CD4-positive, alpha-beta T cell (primary cell): ENCODE measurements at regions of chr2 and their contacts with region 1.

Region 1: DNA sequence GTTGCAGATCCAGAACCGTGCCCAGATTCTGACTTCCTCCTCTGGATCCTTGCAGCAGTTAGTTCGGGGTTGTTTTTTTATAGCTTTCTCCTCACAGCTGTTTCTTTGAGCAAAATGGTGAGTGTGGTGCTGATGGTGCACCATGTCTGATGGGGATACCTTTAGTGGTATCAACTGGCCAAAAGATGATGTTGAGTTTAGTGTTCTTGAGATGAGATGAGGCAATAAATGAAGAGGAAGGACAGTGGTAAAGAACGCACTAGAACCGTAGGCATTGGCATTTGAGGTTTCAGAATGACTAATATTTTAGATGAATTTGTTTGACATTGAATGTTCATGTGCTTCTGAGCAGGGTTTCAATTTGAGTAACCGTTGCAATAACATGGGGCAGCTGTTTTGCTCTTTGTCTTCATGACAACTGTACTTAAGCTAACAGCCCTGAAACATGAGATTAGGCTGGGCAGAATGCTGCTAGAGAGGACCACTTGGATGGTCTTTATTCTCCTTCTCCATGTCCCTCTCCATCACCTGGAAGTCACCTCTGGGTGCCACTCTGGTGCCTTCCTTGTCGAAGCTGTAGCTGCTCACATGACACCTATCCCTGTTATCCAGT is 3.9 kb downstream of the CTLA4 start:
- DNase-seq: peak in 4 of 14 experiments; percentile 28 to 62 (median 48)
- ATAC-seq: no peak
- H3K4me3 ChIP-seq: peak overlapping the region; percentile 58
- H3K4me3 Mint-ChIP-seq: peak overlapping the region; percentile 89
- H3K27ac ChIP-seq: peak overlapping the region; percentile 6 to 62
- H3K27ac Mint-ChIP-seq: peak overlapping the region; percentile 93
- H3K4me1 ChIP-seq: peaks cover 57% of the 10 kb centered on the region
- H3K4me1 Mint-ChIP-seq: peaks cover 97% of the 10 kb centered on the region
- H3K27me3 ChIP-seq: no peaks in the 10 kb centered on the region
- H3K27me3 Mint-ChIP-seq: no peaks in the 10 kb centered on the region
- CTCF ChIP-seq: no peak

Region 2: DNA sequence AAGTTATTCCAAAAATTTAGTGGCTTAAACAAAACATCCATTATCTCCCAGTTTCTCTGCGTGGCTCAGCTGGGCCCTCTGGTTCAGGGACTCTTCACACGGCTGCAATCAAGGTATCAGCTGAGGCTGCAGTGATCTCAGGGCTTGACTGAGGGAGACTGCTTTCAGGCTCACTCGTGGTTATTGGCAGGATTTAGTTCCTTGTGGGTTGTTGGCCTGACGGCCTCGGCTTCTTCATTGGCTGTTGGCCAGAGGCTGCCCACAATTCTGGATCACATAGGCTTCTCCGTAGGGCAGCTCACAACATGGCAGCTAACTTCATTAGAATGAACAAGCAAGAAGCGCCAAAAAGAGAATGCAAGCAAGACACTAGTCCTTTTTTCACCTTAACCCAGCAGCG is 453.2 kb before region 1 on chr2:
- CTCF ChIA-PET with region 1: no interaction called
- POLR2A ChIA-PET with region 1: no interaction called
- intact Hi-C with region 1: no loop called
- DNase-seq: no peak
- ATAC-seq: no peak
- H3K4me3 ChIP-seq: no peak overlapping the region
- H3K4me3 Mint-ChIP-seq: no peak overlapping the region
- H3K27ac ChIP-seq: no peak overlapping the region
- H3K27ac Mint-ChIP-seq: no peak overlapping the region
- H3K4me1 ChIP-seq: no peaks in the 10 kb centered on the region
- H3K4me1 Mint-ChIP-seq: no peaks in the 10 kb centered on the region
- H3K27me3 ChIP-seq: no peaks in the 10 kb centered on the region
- H3K27me3 Mint-ChIP-seq: no peaks in the 10 kb centered on the region
- CTCF ChIP-seq: no peak

Region 3: GRCh38 chr2:203706403-203706802 is 165.1 kb before region 1 on chr2 and contains the start of gene CD28:
- CTCF ChIA-PET with region 1: no interaction called
- POLR2A ChIA-PET with region 1: interaction called, 10 read pairs
- intact Hi-C with region 1: no loop called
- DNase-seq: peak; percentile 78 to 97 (median 86)
- ATAC-seq: peak; percentile 76
- H3K4me3 ChIP-seq: peak within 1 kb of the TSS; percentile 81
- H3K4me3 Mint-ChIP-seq: peak within 1 kb of the TSS; percentile 90
- H3K27ac ChIP-seq: peak within 1 kb of the TSS; percentile 82 to 92
- H3K27ac Mint-ChIP-seq: peak within 1 kb of the TSS; percentile 92
- H3K4me1 ChIP-seq: peaks cover 22% of the 10 kb centered on the region
- H3K4me1 Mint-ChIP-seq: peaks cover 54% of the 10 kb centered on the region
- H3K27me3 ChIP-seq: no peaks in the 10 kb centered on the region
- H3K27me3 Mint-ChIP-seq: no peaks in the 10 kb centered on the region
- CTCF ChIP-seq: no peak
- total RNA-seq, gene CD28: 128 to 130 TPM

Region 4: DNA sequence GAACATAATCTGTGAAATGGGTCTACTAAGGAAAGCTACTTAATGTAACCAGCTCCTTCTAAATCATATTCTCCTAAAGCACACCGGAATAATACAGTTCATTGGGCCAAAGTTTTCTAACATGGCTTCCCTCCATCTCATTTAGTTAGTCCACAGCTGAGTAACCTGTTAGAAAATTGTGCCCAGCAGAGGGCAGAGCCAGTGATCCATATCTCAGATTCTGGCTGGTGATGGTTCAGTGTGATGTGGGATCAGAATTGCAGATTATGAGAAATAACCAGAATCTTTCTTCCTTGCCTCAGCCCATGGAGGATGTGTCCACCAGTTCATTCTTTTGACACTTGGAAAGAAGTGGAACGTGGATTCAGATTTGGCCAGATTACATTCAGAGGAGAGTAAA is 13.3 kb before region 1 on chr2:
- CTCF ChIA-PET with region 1: interaction called, 7 read pairs
- POLR2A ChIA-PET with region 1: interaction called, 37 read pairs
- intact Hi-C with region 1: no loop called
- DNase-seq: peak in 5 of 14 experiments; percentile 11 to 66 (median 50)
- ATAC-seq: peak; percentile 41
- H3K4me3 ChIP-seq: no peak overlapping the region
- H3K4me3 Mint-ChIP-seq: peak overlapping the region; percentile 31
- H3K27ac ChIP-seq: no peak overlapping the region
- H3K27ac Mint-ChIP-seq: peak overlapping the region; percentile 73
- H3K4me1 ChIP-seq: peaks cover 26% of the 10 kb centered on the region
- H3K4me1 Mint-ChIP-seq: peaks cover 78% of the 10 kb centered on the region
- H3K27me3 ChIP-seq: no peaks in the 10 kb centered on the region
- H3K27me3 Mint-ChIP-seq: no peaks in the 10 kb centered on the region
- CTCF ChIP-seq: peak; percentile 35

Region 5: DNA sequence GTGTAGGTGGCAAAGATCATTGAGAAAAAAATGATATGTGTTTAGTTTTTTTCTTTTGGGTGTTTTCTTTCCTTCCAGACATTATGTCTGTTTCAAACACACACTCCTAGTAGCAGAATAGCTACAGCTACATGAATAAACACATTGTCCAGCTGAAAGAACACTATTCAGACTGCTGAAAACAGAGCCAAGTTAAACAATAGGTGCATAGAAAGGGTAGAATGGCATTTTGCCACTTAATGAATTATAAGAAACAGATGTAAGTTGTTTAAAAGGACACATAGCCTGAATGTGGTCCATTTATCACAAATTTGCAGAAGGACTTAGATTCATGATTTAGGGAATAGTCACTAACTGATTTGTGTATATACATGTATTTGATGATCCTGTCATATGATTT is 16.2 kb after region 1 on chr2:
- CTCF ChIA-PET with region 1: interaction called, 3 read pairs
- POLR2A ChIA-PET with region 1: interaction called, 12 read pairs
- intact Hi-C with region 1: no loop called
- DNase-seq: no peak
- ATAC-seq: no peak
- H3K4me3 ChIP-seq: no peak overlapping the region
- H3K4me3 Mint-ChIP-seq: no peak overlapping the region
- H3K27ac ChIP-seq: no peak overlapping the region
- H3K27ac Mint-ChIP-seq: no peak overlapping the region
- H3K4me1 ChIP-seq: no peaks in the 10 kb centered on the region
- H3K4me1 Mint-ChIP-seq: no peaks in the 10 kb centered on the region
- H3K27me3 ChIP-seq: no peaks in the 10 kb centered on the region
- H3K27me3 Mint-ChIP-seq: no peaks in the 10 kb centered on the region
- CTCF ChIP-seq: no peak

Region 6: GRCh38 chr2:203909261-203909967 is 37.9 kb after region 1 on chr2:
- CTCF ChIA-PET with region 1: interaction called, 9 read pairs
- POLR2A ChIA-PET with region 1: interaction called, 9 read pairs
- intact Hi-C with region 1: loop called in 1 of 2 experiments (anchors 2 kb)
- DNase-seq: peak in 7 of 14 experiments; percentile 10 to 70 (median 45)
- ATAC-seq: peak; percentile 82
- H3K4me3 ChIP-seq: peak overlapping the region; percentile 39
- H3K4me3 Mint-ChIP-seq: peak overlapping the region; percentile 5
- H3K27ac ChIP-seq: no peak overlapping the region
- H3K27ac Mint-ChIP-seq: peak overlapping the region; percentile 18
- H3K4me1 ChIP-seq: peaks cover 13% of the 10 kb centered on the region
- H3K4me1 Mint-ChIP-seq: peaks cover 19% of the 10 kb centered on the region
- H3K27me3 ChIP-seq: no peaks in the 10 kb centered on the region
- H3K27me3 Mint-ChIP-seq: no peaks in the 10 kb centered on the region
- CTCF ChIP-seq: peak; percentile 87

Region 7: GRCh38 chr2:203934041-203934492 is 62.6 kb after region 1 on chr2:
- CTCF ChIA-PET with region 1: no interaction called
- POLR2A ChIA-PET with region 1: interaction called, 11 read pairs
- intact Hi-C with region 1: no loop called
- DNase-seq: peak in 9 of 14 experiments; percentile 32 to 71 (median 50)
- ATAC-seq: peak; percentile 40
- H3K4me3 ChIP-seq: peak overlapping the region; percentile 19
- H3K4me3 Mint-ChIP-seq: peak overlapping the region; percentile 83
- H3K27ac ChIP-seq: peak overlapping the region; percentile 67 to 82
- H3K27ac Mint-ChIP-seq: peak overlapping the region; percentile 93
- H3K4me1 ChIP-seq: peaks cover 41% of the 10 kb centered on the region
- H3K4me1 Mint-ChIP-seq: peaks cover 72% of the 10 kb centered on the region
- H3K27me3 ChIP-seq: no peaks in the 10 kb centered on the region
- H3K27me3 Mint-ChIP-seq: no peaks in the 10 kb centered on the region
- CTCF ChIP-seq: no peak